ENCODE measurements at regions of chr2 and their contacts with region 1.

Region 1: DNA sequence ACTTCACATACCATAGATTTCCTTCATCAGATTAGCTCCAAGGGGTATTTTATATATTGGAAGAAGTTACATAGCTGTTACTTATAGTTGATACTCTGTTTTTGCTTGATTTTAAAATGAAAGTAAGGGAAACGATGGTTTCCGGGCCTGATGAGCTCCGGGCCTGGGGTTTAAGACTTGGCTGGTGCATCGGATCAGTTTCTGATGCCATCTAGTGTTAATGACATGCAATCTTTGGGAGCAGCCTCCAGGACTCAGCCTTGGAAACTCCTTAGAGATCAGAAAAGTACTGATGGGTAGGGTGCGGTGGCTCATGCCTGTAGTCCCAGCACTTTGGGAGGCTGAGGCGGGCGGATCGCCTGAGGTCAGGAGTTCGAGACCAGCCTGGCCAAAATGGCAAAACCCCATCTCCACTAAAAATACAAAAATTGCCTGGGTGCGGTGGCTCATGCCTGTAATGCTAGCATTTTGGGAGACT is 47.1 kb upstream of the CNOT11 start:
- DNase-seq: peak; percentile 24
- H3K4me3 ChIP-seq: no peak overlapping the region
- CTCF ChIP-seq: peak; percentile 63

Region 2: GRCh38 chr2:100596465-100596864 is 609.1 kb before region 1 on chr2:
- CTCF ChIA-PET with region 1: interaction called, 27 read pairs
- POLR2A ChIA-PET with region 1: no interaction called
- DNase-seq: no peak
- H3K4me3 ChIP-seq: no peak overlapping the region
- CTCF ChIP-seq: no peak

Region 3: GRCh38 chr2:101012706-101013181 is 192.8 kb before region 1 on chr2:
- CTCF ChIA-PET with region 1: interaction called, 137 read pairs
- POLR2A ChIA-PET with region 1: interaction called, 4 read pairs
- DNase-seq: no peak
- H3K4me3 ChIP-seq: no peak overlapping the region
- CTCF ChIP-seq: peak; percentile 62

Region 4: GRCh38 chr2:101036562-101037457 is 168.8 kb before region 1 on chr2:
- CTCF ChIA-PET with region 1: interaction called, 132 read pairs
- POLR2A ChIA-PET with region 1: no interaction called
- DNase-seq: no peak
- H3K4me3 ChIP-seq: no peak overlapping the region
- CTCF ChIP-seq: peak; percentile 49

Region 5: DNA sequence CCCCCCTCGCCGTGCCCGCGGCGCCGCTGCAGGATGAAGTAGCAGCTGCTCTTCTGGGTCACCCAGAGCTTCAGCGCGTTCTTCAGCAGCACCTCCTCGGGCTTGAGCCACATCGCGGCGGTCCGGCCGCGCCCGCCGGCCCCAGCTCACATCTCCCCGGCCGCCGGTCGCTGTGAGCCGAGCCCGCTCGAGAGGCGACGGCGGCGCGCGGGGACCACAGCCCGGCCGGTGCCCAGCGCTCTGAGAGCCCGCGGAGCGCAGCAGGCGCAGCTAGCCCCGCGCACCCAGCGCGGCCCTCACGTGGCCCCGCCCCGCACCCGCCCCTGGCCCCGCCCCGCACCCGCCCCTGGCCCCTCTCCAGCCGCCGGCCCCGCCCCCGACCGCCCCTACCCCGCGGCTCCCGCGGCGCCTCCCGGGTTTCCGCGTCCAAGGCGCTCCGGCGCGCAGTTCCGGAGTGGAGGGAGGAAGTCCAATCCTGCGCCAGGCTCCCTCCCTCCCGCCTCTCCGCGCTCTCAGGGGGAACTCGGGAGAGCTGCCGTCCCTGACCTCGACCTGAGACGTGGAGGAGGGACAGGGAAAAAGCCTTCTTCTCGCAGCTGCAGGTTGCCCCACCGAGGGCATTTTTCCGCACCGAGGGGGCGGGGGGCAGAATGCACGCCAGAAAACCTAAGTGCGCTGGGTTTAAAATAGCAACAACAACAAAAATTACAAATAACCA is 54.3 kb before region 1 on chr2 and contains the start of gene TBC1D8:
- CTCF ChIA-PET with region 1: interaction called, 14 read pairs
- POLR2A ChIA-PET with region 1: no interaction called
- DNase-seq: no peak
- H3K4me3 ChIP-seq: peak within 1 kb of the TSS; percentile 64
- CTCF ChIP-seq: no peak

Region 6: GRCh38 chr2:101219246-101219645 is 13.7 kb after region 1 on chr2:
- CTCF ChIA-PET with region 1: interaction called, 49 read pairs
- POLR2A ChIA-PET with region 1: no interaction called
- DNase-seq: no peak
- H3K4me3 ChIP-seq: no peak overlapping the region
- CTCF ChIP-seq: no peak

Measured in AG04449 (cell line).